Activated CD4-positive, alpha-beta memory T cell treated with anti-CD3 and anti-CD28 coated beads for 36 hours (primary cell): ENCODE measurements at regions of chr20 and their contacts with region 1.

Region 1: GRCh38 chr20:3767427-3768341 is at the start of gene ADISSP:
- DNase-seq: peak; percentile 99
- H3K4me3 Mint-ChIP-seq: peak within 1 kb of the TSS; percentile 87
- H3K27ac Mint-ChIP-seq: peak within 1 kb of the TSS; percentile 84
- H3K4me1 Mint-ChIP-seq: peaks cover 23% of the 10 kb centered on the region
- H3K27me3 Mint-ChIP-seq: no peaks in the 10 kb centered on the region
- total RNA-seq, gene ADISSP: 50.6 to 51.4 TPM

Region 2: DNA sequence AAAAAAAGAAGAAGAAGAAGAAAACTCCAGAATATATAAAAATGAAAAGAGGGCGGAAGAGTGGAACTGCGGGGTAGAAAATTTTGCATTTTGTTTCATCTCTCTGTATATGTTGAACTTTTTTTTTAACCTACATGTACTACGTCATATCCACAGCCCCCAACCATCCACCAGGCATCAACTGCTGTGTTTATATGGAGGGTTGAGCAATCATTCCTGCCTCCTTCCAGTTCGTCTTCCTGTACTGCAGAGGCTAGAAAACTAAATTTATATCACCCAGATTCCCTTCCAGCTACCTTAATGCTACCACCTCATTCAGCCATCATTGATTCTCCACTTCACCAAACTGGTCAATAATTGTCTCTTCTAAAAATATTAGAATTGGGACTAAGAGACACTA is 45.8 kb before region 1 on chr20:
- CTCF ChIA-PET with region 1: interaction called, 4 read pairs
- POLR2A ChIA-PET with region 1: no interaction called
- intact Hi-C with region 1: loop called (anchors 5 kb)
- DNase-seq: no peak
- H3K4me3 Mint-ChIP-seq: no peak overlapping the region
- H3K27ac Mint-ChIP-seq: no peak overlapping the region
- H3K4me1 Mint-ChIP-seq: no peaks in the 10 kb centered on the region
- H3K27me3 Mint-ChIP-seq: peaks cover 19% of the 10 kb centered on the region

Region 3: DNA sequence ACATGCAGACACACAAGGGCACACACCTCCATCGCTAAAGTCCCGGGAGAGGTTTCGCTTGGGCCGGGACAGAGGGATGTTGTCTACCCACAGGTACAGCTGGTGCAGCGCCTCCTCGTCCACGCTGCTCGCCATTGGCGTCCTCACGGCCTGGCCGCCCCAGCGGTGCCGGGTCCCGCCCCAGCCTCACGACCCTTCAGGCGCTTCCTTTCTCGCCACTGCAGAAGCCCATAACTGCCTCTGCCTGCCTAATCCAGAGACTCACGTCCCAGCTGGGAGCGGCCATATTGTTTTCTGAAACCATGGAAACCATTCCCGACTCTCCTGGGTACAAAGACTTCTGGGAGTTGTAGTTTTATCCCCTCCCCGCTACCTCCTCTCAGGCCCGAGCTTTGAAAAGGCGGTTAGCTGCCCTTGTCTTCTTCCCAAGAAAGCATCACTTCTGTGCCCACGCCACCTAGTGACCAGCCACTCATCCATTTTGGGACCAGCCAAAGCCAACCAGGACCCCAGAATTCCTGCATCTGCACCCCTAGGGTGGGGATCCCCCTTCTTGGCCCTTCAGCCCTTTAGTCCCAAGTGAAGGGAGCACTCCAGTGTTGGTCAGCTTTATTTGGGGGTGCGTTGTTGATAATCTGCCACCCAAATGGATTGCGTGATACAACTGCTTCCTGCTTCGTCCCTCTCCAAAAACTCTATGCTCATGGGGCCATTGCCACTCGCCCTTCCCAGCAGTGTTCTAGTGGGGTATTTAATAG is 13.6 kb after region 1 on chr20 and contains the start of gene SPEF1:
- CTCF ChIA-PET with region 1: interaction called, 30 read pairs
- POLR2A ChIA-PET with region 1: interaction called, 25 read pairs
- intact Hi-C with region 1: loop called (anchors 1 kb)
- DNase-seq: peak; percentile 68
- H3K4me3 Mint-ChIP-seq: peak within 1 kb of the TSS; percentile 43
- H3K27ac Mint-ChIP-seq: no peak within 1 kb of the TSS
- H3K4me1 Mint-ChIP-seq: peaks cover 52% of the 10 kb centered on the region
- H3K27me3 Mint-ChIP-seq: peaks cover 12% of the 10 kb centered on the region
- total RNA-seq, gene SPEF1: 0.17 TPM in 1 of 2 experiments, not detected in the other

Region 4: DNA sequence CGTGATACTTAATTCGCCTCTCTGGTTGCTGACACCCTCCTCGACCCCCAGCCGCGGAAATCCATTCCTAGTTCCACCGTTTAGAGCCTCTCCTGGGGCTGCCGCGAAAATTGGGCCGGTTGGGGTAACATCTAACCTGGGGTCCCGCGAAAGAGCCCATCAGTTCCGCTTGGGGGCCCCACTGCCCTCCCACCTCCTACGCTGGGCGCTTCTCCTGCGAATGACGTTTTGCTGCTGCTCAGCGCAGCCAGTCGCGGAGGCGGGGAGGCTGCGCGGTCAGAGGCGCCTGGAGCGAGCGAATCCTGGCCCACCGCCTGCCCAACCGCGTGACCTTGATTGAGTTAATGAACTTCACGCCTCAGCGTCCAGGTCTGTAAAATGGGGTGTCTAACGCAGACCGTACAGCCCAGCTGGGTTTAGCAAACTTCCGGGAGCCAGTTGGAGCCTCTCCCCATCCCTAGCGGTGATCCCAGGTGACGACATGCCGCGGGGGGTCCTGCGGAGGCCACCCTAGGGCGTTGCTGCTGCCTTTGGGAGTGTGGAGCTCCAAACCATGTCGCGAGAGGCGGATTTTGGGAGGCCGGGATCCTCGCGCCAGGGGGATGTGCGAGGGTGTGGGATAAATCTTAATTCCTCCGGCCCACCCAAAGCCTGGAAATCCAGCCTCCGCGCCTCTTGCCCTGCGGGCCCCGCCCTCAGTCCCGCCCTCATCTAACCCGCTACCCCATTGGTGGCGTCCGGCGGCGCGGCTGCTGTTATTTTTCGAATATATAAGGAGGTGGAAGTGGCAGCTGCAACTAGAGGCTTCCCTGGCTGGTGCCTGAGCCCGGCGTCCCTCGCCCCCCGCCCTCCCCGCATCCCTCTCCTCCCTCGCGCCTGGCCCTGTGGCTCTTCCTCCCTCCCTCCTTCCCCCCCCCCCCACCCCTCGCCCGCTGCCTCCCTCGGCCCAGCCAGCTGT is 28.1 kb after region 1 on chr20 and contains the start of gene CDC25B:
- CTCF ChIA-PET with region 1: interaction called, 3 read pairs
- POLR2A ChIA-PET with region 1: interaction called, 12 read pairs
- intact Hi-C with region 1: no loop called
- DNase-seq: peak; percentile 95
- H3K4me3 Mint-ChIP-seq: peak within 1 kb of the TSS; percentile 95
- H3K27ac Mint-ChIP-seq: peak within 1 kb of the TSS; percentile 98
- H3K4me1 Mint-ChIP-seq: peaks cover 36% of the 10 kb centered on the region
- H3K27me3 Mint-ChIP-seq: no peaks in the 10 kb centered on the region
- total RNA-seq, gene CDC25B: 120 to 128 TPM

Region 5: GRCh38 chr20:3820048-3820900 is 52.6 kb after region 1 on chr20 and contains the start of gene AP5S1:
- CTCF ChIA-PET with region 1: interaction called, 22 read pairs
- POLR2A ChIA-PET with region 1: interaction called, 3 read pairs
- intact Hi-C with region 1: no loop called
- DNase-seq: peak; percentile 96
- H3K4me3 Mint-ChIP-seq: peak within 1 kb of the TSS; percentile 81
- H3K27ac Mint-ChIP-seq: peak within 1 kb of the TSS; percentile 93
- H3K4me1 Mint-ChIP-seq: peaks cover 36% of the 10 kb centered on the region
- H3K27me3 Mint-ChIP-seq: no peaks in the 10 kb centered on the region
- total RNA-seq, gene AP5S1: 9.1 to 10.0 TPM